ENCODE measurements at regions of chr2 and their contacts with region 1.

Region 1: GRCh38 chr2:64488050-64488974 is 34.4 kb downstream of the LGALSL start:
- DNase-seq: peak; percentile 72
- H3K4me3 Mint-ChIP-seq: no peak overlapping the region
- H3K27ac Mint-ChIP-seq: no peak overlapping the region
- H3K4me1 Mint-ChIP-seq: peaks cover 27% of the 10 kb centered on the region
- H3K27me3 Mint-ChIP-seq: no peaks in the 10 kb centered on the region
- CTCF ChIP-seq: peak; percentile 92

Region 2: DNA sequence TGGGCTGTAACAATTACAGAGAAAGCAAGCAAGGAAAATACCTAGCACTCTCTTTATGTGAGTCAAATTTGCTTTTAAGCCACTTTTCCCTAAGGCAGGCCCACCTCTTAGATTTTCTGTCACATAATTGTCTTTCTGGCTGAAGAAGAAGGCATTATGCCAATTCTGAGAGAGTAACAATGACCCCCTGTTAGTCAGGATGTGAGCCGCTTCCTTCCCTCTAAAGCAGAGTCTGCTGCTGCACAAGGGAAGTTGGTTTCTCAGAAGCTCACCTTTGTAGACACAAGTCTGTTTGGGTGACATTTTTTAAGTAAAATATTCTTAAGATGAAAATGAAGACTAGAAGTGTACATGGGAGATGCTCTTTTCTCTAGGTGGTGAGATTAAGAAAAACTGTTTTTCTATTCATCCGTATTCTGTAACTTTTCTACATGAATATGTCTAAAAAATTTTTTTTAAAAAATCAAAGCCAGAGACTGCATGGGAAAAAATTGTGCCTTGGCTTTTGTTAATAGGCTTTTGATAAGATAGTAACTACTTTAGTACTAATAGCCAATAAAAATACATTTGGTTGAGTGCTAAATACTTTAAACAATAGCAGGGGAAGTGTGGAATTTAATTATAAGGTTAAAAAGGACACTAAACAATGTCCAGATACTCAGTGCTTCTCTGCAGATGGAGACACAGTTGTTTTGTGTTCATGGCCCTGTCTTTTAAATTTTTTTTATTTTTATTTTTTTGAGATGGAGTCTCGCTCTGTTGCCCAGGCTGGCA is 435.7 kb before region 1 on chr2:
- CTCF ChIA-PET with region 1: interaction called, 6 read pairs
- POLR2A ChIA-PET with region 1: no interaction called
- intact Hi-C with region 1: loop called (anchors 2 kb)
- DNase-seq: no peak
- H3K4me3 Mint-ChIP-seq: no peak overlapping the region
- H3K27ac Mint-ChIP-seq: no peak overlapping the region
- H3K4me1 Mint-ChIP-seq: peaks cover 23% of the 10 kb centered on the region
- H3K27me3 Mint-ChIP-seq: no peaks in the 10 kb centered on the region
- CTCF ChIP-seq: no peak

Region 3: GRCh38 chr2:64359892-64360657 is 128.2 kb before region 1 on chr2:
- CTCF ChIA-PET with region 1: interaction called, 32 read pairs
- POLR2A ChIA-PET with region 1: interaction called, 4 read pairs
- intact Hi-C with region 1: no loop called
- DNase-seq: peak; percentile 97
- H3K4me3 Mint-ChIP-seq: peak overlapping the region; percentile 48
- H3K27ac Mint-ChIP-seq: peak overlapping the region; percentile 95
- H3K4me1 Mint-ChIP-seq: peaks cover 44% of the 10 kb centered on the region
- H3K27me3 Mint-ChIP-seq: no peaks in the 10 kb centered on the region
- CTCF ChIP-seq: no peak

Region 4: GRCh38 chr2:64463781-64464180 is 24.5 kb before region 1 on chr2:
- CTCF ChIA-PET with region 1: interaction called, 14 read pairs
- POLR2A ChIA-PET with region 1: interaction called, 7 read pairs
- intact Hi-C with region 1: no loop called
- DNase-seq: peak; percentile 84
- H3K4me3 Mint-ChIP-seq: no peak overlapping the region
- H3K27ac Mint-ChIP-seq: no peak overlapping the region
- H3K4me1 Mint-ChIP-seq: peaks cover 12% of the 10 kb centered on the region
- H3K27me3 Mint-ChIP-seq: no peaks in the 10 kb centered on the region
- CTCF ChIP-seq: no peak

Region 5: GRCh38 chr2:64504774-64505720 is 16.7 kb after region 1 on chr2:
- CTCF ChIA-PET with region 1: interaction called, 22 read pairs
- POLR2A ChIA-PET with region 1: no interaction called
- intact Hi-C with region 1: no loop called
- DNase-seq: no peak
- H3K4me3 Mint-ChIP-seq: no peak overlapping the region
- H3K27ac Mint-ChIP-seq: no peak overlapping the region
- H3K4me1 Mint-ChIP-seq: peaks cover 9% of the 10 kb centered on the region
- H3K27me3 Mint-ChIP-seq: no peaks in the 10 kb centered on the region
- CTCF ChIP-seq: no peak

Region 6: GRCh38 chr2:64543008-64543697 is 54.8 kb after region 1 on chr2:
- CTCF ChIA-PET with region 1: no interaction called
- POLR2A ChIA-PET with region 1: no interaction called
- intact Hi-C with region 1: no loop called
- DNase-seq: peak; percentile 18
- H3K4me3 Mint-ChIP-seq: no peak overlapping the region
- H3K27ac Mint-ChIP-seq: peak overlapping the region; percentile 9
- H3K4me1 Mint-ChIP-seq: peaks cover 39% of the 10 kb centered on the region
- H3K27me3 Mint-ChIP-seq: no peaks in the 10 kb centered on the region
- CTCF ChIP-seq: no peak

Measured in MCF 10A (cell line).